ENCODE measurements at regions of chr1 and their contacts with region 1.

Region 1: GRCh38 chr1:1574721-1575537 is at the start of gene SSU72:
- DNase-seq: peak; percentile 91
- H3K4me3 Mint-ChIP-seq: peak within 1 kb of the TSS; percentile 95
- H3K27ac Mint-ChIP-seq: peak within 1 kb of the TSS; percentile 98
- H3K4me1 Mint-ChIP-seq: peaks cover 20% of the 10 kb centered on the region
- H3K27me3 Mint-ChIP-seq: peaks cover 3% of the 10 kb centered on the region
- total RNA-seq, gene SSU72: 135 and 137 TPM in 2 replicates

Region 2: GRCh38 chr1:1471389-1472052 is 103.4 kb before region 1 on chr1 and contains the start of gene ATAD3B:
- intact Hi-C with region 1: loop called (anchors 2 kb)
- DNase-seq: peak; percentile 92
- H3K4me3 Mint-ChIP-seq: peak within 1 kb of the TSS; percentile 88
- H3K27ac Mint-ChIP-seq: peak within 1 kb of the TSS; percentile 86
- H3K4me1 Mint-ChIP-seq: peaks cover 10% of the 10 kb centered on the region
- H3K27me3 Mint-ChIP-seq: no peaks in the 10 kb centered on the region
- total RNA-seq, gene ATAD3B: 106 and 113 TPM in 2 replicates

Region 3: DNA sequence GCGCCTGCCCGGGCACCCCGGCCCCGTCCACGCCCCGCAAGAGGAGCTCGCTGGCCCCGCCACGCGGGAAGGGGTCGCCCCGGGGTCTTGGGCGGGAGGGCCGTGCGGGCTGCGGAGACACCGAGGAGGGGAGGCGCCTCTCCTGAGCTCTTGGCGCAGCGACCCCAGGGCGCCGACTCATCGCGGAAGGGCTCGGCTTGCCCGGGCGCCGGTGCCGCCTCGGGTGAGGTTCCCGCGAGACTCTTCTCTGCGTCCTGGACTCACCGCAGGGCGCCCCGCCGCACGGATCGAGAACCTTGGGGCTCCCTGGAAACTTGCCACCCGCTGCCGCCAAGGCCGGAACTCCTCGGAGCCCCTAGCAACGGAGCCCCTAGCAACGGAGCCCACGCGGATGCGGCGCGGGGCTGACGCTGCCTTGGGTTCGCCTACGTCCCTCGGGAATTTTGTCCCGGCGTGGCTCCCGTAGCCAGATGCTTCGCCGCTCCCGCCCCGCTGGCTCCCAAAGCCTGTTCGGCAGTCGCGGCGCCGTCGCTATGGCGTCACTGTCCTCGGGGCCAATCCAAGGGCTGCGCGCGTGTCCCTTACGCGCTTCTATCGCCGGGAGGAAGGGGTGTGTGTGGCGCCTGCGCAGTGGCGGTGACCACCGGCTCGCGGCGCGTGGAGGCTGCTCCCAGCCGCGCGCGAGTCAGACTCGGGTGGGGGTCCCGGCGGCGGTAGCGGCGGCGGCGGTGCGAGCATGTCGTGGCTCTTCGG is 63.2 kb before region 1 on chr1 and contains the start of gene ATAD3A:
- intact Hi-C with region 1: loop called (anchors 1 kb)
- DNase-seq: peak; percentile 95
- H3K4me3 Mint-ChIP-seq: peak within 1 kb of the TSS; percentile 97
- H3K27ac Mint-ChIP-seq: peak within 1 kb of the TSS; percentile 92
- H3K4me1 Mint-ChIP-seq: peaks cover 7% of the 10 kb centered on the region
- H3K27me3 Mint-ChIP-seq: no peaks in the 10 kb centered on the region
- total RNA-seq, gene ATAD3A: 108 TPM in 2 replicates

Region 4: DNA sequence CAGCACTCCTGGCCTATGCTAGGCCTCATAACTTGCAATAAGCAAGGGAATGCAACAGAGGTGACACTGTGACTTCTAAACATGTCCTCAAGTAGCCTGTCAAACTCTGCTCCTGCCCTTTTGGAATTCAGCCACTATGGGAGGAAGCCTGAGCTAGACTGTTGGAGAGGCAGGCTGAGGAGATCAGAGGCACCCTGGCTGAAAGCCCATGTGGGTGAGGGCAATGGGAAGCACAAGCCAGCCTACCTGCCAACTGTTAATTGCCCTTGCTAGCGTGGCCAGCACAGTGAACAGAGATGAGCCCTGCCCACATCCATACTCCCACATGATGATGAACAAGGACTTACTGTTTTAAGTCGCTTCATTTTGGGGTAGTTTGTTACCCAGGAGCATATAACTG is 298.3 kb after region 1 on chr1:
- intact Hi-C with region 1: no loop called
- DNase-seq: no peak
- H3K4me3 Mint-ChIP-seq: no peak overlapping the region
- H3K27ac Mint-ChIP-seq: no peak overlapping the region
- H3K4me1 Mint-ChIP-seq: peaks cover 52% of the 10 kb centered on the region
- H3K27me3 Mint-ChIP-seq: no peaks in the 10 kb centered on the region

Region 5: DNA sequence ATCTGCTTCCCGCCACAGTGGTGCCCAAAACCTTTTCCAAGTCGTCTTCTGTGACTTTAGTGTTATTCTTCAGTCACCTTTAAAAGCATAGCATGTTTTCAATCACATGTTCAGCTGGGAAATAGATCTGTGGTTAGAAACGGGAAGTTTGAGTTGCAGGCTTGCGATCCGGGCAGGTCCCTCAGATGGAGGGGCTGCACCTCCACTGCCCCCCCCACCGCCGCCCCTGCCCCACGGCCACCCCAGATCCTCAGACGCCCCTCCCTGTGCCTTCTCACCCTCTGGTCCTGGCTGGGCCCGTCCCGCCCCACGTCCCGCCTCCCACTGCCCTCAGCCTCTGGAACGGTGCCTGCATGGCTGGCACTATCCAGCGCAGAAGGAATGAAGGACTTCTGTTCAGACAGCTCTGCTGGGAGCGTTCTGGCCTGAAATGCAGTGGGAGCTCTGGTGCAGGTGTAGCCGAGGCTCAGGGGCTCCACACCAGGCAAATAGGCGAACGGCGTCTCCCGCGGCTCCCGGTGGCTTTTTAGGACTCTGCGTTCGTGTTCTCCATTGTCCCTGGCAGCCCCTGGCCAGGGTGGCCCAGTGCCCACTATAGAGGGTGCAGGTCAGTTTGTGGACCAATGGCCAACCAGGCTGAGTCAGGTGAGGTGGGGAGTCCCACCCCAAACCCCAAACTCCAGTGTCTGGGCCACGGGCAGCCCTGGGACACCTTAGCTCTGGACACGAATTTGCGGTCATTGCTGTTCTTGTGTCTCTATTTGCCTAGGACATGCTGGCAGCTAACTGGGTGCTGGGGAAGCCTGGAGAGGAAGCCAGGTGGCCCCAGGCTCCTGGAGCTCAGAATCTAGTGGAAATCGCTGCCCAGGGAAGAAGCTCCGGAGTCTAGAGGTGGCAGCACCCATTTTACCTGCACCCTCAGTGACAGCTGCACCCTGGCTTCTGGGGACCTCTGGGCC is 552.5 kb after region 1 on chr1:
- intact Hi-C with region 1: no loop called
- DNase-seq: no peak
- H3K4me3 Mint-ChIP-seq: peak overlapping the region; percentile 45
- H3K27ac Mint-ChIP-seq: no peak overlapping the region
- H3K4me1 Mint-ChIP-seq: peaks cover 6% of the 10 kb centered on the region
- H3K27me3 Mint-ChIP-seq: peaks cover 3% of the 10 kb centered on the region

Measured in activated T-helper 1 cell treated with anti-CD3 and anti-CD28 coated beads, Interleukin-12 subunit alpha, Interleukin-12 subunit beta, Interleukin-2, Interleukin-4 antibody, amounts not matched to agents 30 ng/mL and 10 ng/mL and 1 ng/mL, durations not matched to agents 14 hours and 24 hours and 36 hours (primary cell).